A673 (cell line): ENCODE measurements at regions of chr17 and their contacts with region 1.

Region 1: DNA sequence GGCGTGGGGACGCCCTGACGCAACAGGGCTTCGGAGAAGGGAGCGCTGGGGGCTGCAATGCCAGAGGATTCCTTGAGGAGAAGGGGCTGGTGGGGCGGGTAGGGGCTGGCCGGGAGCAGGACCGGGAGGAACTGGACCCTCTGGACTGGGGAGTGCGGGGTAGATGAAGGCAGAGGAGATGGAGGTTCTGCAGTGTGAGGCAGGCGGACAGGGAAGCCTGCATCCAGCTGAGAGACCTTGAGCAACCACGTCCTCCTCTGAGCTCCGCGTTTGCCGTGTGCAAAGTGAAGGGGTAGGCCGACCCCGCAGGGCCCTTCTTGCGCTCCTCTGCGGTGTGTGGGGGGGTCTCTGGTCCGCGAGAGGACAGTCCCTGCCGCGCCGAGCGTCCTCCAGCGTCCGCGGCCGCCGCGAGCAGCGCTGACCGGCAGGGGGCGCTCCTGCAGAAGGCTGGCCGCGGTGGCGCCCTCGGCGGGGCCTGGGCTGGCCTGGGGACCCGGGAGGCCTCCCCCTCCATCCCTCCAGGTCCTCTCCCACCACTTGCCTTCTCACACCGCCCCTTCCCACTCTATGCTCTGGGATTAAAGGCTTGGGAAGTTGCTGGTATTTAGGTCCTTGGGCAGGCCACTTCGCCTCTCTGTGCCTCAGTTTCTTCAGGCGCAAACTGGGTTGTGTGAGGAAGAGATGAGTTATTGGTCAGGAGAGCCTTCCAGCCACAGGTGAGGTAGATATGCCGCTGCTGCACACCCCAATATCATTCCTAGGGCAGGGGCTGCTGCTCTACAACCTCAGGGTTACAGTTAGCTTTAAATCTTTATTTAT is 9.6 kb upstream of the WNT9B start:
- DNase-seq: peak; percentile 24
- H3K4me3 ChIP-seq: peak overlapping the region; percentile 31
- H3K27ac ChIP-seq: no peak overlapping the region
- H3K4me1 ChIP-seq: no peaks in the 10 kb centered on the region
- H3K27me3 ChIP-seq: peaks cover 8% of the 10 kb centered on the region
- CTCF ChIP-seq: peak; percentile 63

Region 2: DNA sequence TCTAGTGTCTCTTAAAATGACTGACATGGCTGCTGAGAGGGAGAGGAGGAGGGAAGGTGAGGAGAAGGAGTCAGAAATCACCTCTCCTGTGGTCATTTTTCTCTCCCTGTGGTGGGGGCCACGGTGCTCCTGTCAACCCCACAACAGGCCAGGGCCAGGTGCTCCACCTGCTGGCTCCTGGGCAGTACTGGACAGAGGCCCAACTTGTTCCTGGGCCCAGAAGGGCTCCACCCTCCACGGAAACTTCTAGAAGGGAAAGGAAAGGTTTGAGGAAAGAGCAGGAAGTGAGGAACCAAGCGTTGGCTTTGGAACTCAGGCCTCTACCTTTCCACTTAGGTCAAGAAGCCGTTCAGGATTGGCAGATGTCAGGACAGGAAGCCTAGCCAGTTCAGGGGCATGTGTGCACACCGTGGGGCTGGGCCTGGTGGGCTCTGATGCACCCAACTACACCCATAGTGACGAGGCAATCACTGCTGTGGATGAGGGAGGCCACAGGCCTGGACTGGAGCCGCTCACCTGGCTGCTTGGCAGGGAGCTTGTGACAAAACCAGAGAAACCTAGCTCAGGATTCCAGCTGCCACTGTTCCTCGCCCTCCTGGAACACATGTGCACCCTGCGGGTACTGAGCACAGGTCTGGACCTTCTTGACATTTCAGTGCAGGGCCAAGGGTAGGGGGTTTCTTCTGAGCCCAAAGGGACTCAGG is 59.4 kb before region 1 on chr17:
- CTCF ChIA-PET with region 1: no interaction called
- POLR2A ChIA-PET with region 1: no interaction called
- intact Hi-C with region 1: no loop called
- DNase-seq: no peak
- H3K4me3 ChIP-seq: no peak overlapping the region
- H3K27ac ChIP-seq: no peak overlapping the region
- H3K4me1 ChIP-seq: no peaks in the 10 kb centered on the region
- H3K27me3 ChIP-seq: no peaks in the 10 kb centered on the region
- CTCF ChIP-seq: peak; percentile 48

Region 3: DNA sequence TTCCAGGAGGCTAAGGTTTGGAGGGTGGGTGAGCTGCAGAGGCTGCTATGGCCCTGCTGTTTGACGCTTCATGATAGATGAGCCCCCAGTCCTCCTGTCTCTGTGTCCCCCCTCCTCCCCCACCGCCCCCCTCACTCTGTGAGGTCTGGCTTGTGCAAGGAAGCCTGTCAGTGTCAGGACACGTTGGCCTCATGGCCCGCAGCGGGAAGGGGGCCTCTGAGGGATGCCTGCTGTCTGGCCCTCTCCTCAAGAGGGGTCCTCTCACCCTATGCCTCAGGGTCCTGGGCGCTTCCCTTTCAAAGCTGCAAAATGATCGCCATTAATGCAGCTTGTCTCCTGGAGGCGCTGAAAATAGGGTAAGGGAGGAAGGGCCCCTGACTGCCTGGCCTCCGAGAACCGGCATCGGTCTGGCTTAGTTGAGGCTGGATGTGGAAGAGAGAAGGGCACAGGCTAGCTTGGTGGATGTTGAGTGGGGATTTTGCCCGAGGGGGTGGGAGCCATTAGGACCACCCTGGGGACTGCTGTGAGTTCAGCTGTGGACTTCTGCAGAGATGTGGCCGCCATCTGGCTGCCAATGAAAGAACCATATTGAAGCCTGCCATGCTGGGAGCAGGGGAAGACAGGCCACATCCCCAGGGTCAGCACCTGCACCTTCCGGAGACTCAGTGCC is 66.4 kb after region 1 on chr17:
- CTCF ChIA-PET with region 1: no interaction called
- POLR2A ChIA-PET with region 1: no interaction called
- intact Hi-C with region 1: loop called (anchors 10 kb)
- DNase-seq: no peak
- H3K4me3 ChIP-seq: no peak overlapping the region
- H3K27ac ChIP-seq: no peak overlapping the region
- H3K4me1 ChIP-seq: no peaks in the 10 kb centered on the region
- H3K27me3 ChIP-seq: peaks cover 3% of the 10 kb centered on the region
- CTCF ChIP-seq: no peak

Region 4: DNA sequence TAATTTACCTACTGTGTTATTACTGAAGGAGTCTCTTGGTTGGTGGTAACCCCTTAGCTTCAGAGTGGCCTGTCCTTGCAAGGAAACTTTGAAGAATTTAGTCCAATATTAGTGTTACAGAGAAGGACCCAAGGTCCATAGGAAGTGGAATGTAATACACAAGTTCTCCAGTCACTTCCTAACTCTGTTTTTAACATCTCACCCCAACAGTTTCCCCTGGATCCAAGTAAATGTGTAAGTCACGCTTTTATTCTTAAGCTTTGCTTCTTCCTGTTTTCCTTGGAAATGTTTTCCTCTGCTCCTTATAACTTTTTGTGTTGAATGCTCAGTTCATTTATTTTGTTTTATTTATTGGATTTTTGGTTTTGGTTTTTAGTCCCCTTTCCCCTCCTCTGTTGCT is 163.1 kb after region 1 on chr17:
- CTCF ChIA-PET with region 1: no interaction called
- POLR2A ChIA-PET with region 1: no interaction called
- intact Hi-C with region 1: loop called (anchors 5 kb)
- DNase-seq: no peak
- H3K4me3 ChIP-seq: no peak overlapping the region
- H3K27ac ChIP-seq: no peak overlapping the region
- H3K4me1 ChIP-seq: no peaks in the 10 kb centered on the region
- H3K27me3 ChIP-seq: no peaks in the 10 kb centered on the region
- CTCF ChIP-seq: no peak

Region 5: DNA sequence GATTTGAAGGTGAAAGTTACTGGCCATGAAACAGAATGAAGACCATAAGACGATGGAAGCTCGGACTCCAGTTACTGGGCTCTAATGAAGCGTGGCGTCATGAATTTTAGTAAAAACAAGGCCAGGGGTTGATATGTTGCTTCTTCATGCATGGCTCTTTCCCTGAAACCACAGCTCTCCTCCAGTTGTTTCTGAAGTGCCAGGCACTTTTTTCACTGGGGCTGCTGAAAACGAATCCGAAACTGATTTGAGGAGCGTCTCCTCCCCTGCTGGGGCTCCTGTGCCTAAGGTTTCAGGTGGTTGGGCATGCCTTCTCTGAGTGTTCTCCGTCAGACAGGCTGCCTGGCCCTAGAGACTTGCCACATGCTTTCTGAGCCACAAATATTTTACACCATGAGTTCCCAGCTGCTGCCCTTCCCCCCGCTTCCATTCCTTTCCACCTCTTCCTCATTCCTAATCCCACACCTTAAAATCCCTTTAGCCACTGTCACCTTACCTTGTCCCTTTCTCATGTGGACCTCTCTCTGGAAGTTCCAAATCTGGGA is 363.7 kb after region 1 on chr17:
- CTCF ChIA-PET with region 1: no interaction called
- POLR2A ChIA-PET with region 1: no interaction called
- intact Hi-C with region 1: no loop called
- DNase-seq: no peak
- H3K4me3 ChIP-seq: no peak overlapping the region
- H3K27ac ChIP-seq: no peak overlapping the region
- H3K4me1 ChIP-seq: no peaks in the 10 kb centered on the region
- H3K27me3 ChIP-seq: no peaks in the 10 kb centered on the region
- CTCF ChIP-seq: no peak